Esophagus muscularis mucosa (tissue), 4 donors: ENCODE measurements at regions of chr1 and their contacts with region 1.

Region 1: GRCh38 chr1:183792300-183792699 is 12.6 kb upstream of the RGL1 start:
- DNase-seq: no peak
- H3K4me3 ChIP-seq: no peak overlapping the region
- H3K27ac ChIP-seq: no peak overlapping the region
- H3K4me1 ChIP-seq: no peaks in the 10 kb centered on the region
- H3K27me3 ChIP-seq: no peaks in the 10 kb centered on the region
- CTCF ChIP-seq: no peak
- EP300 ChIP-seq: no peak
- POLR2A ChIP-seq: no peak

Region 2: GRCh38 chr1:183353597-183353996 is 438.7 kb before region 1 on chr1:
- intact Hi-C with region 1: loop called (anchors 10 kb)
- DNase-seq: no peak
- H3K4me3 ChIP-seq: no peak overlapping the region
- H3K27ac ChIP-seq: no peak overlapping the region
- H3K4me1 ChIP-seq: peaks cover 8 to 27% (median 22%) of the 10 kb centered on the region in 4 donors
- H3K27me3 ChIP-seq: no peaks in the 10 kb centered on the region
- CTCF ChIP-seq: no peak
- EP300 ChIP-seq: no peak
- POLR2A ChIP-seq: no peak

Region 3: GRCh38 chr1:184298440-184299405 is 506.4 kb after region 1 on chr1:
- intact Hi-C with region 1: no loop called
- DNase-seq: no peak
- H3K4me3 ChIP-seq: no peak overlapping the region
- H3K27ac ChIP-seq: peak overlapping the region in 3 of 4 donors; percentile 2 to 41 (median 22)
- H3K4me1 ChIP-seq: peaks cover 31 to 42% (median 37%) of the 10 kb centered on the region in 4 donors
- H3K27me3 ChIP-seq: no peaks in the 10 kb centered on the region
- CTCF ChIP-seq: no peak
- EP300 ChIP-seq: no peak
- POLR2A ChIP-seq: no peak